CD8-positive, alpha-beta T cell (primary cell): ENCODE measurements at regions of chr3 and their contacts with region 1.

Region 1: GRCh38 chr3:17233398-17233800 is 348.6 kb downstream of the PLCL2 start:
- DNase-seq: peak in 7 of 9 experiments; percentile 7 to 79 (median 35)
- ATAC-seq: peak; percentile 99
- H3K4me3 ChIP-seq: no peak overlapping the region
- H3K4me3 Mint-ChIP-seq: no peak overlapping the region
- H3K27ac ChIP-seq: no peak overlapping the region
- H3K27ac Mint-ChIP-seq: peak overlapping the region; percentile 3
- H3K4me1 ChIP-seq: peaks cover 20% of the 10 kb centered on the region
- H3K4me1 Mint-ChIP-seq: peaks cover 24% of the 10 kb centered on the region
- H3K27me3 ChIP-seq: no peaks in the 10 kb centered on the region
- H3K27me3 Mint-ChIP-seq: no peaks in the 10 kb centered on the region
- CTCF ChIP-seq: peak; percentile 84

Region 2: DNA sequence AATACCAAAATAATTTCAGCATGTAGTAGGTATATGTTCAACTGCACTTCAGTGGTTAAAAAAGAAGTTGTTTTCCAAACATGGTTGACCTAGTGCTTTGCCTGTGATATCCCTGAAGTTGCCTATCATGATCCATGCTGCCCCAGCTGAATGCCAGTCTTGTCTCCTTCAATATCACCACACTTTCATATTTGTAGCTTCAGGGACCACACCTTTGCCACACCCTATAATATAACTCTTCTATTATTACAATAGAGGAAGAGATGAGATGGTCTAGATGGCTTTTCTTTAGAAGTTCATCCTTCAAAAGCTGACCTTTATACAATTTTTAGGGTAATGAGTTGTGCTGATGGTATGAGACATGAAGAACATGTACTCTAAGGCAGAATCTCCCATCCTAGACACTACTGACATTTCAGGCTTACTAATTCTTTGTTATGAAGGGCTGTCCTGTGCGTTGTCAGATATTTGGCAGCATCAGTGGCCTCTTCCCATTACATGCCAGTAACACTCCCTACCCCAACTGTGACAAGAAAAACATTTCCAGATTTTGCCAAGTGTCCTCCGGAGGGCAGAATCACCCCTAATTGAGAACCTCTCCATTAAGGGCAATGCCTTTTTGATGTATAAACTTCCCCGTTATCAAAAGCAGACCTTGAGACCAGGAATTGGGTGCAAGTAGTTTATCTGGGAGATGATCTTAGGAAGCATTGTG is 424.8 kb before region 1 on chr3:
- CTCF ChIA-PET with region 1: no interaction called
- POLR2A ChIA-PET with region 1: no interaction called
- intact Hi-C with region 1: loop called in 1 of 2 experiments (anchors 1 kb)
- DNase-seq: peak in 2 of 9 experiments; percentile 29 to 47
- ATAC-seq: no peak
- H3K4me3 ChIP-seq: no peak overlapping the region
- H3K4me3 Mint-ChIP-seq: no peak overlapping the region
- H3K27ac ChIP-seq: no peak overlapping the region
- H3K27ac Mint-ChIP-seq: no peak overlapping the region
- H3K4me1 ChIP-seq: peaks cover 14% of the 10 kb centered on the region
- H3K4me1 Mint-ChIP-seq: peaks cover 29% of the 10 kb centered on the region
- H3K27me3 ChIP-seq: no peaks in the 10 kb centered on the region
- H3K27me3 Mint-ChIP-seq: no peaks in the 10 kb centered on the region
- CTCF ChIP-seq: no peak

Region 3: GRCh38 chr3:16828815-16829214 is 404.6 kb before region 1 on chr3:
- CTCF ChIA-PET with region 1: interaction called, 5 read pairs
- POLR2A ChIA-PET with region 1: no interaction called
- intact Hi-C with region 1: loop called (anchors 1 to 2 kb)
- DNase-seq: peak in 8 of 9 experiments; percentile 34 to 80 (median 60)
- ATAC-seq: peak; percentile 73
- H3K4me3 ChIP-seq: no peak overlapping the region
- H3K4me3 Mint-ChIP-seq: no peak overlapping the region
- H3K27ac ChIP-seq: no peak overlapping the region
- H3K27ac Mint-ChIP-seq: peak overlapping the region; percentile 60
- H3K4me1 ChIP-seq: peaks cover 15% of the 10 kb centered on the region
- H3K4me1 Mint-ChIP-seq: peaks cover 26% of the 10 kb centered on the region
- H3K27me3 ChIP-seq: no peaks in the 10 kb centered on the region
- H3K27me3 Mint-ChIP-seq: no peaks in the 10 kb centered on the region
- CTCF ChIP-seq: peak; percentile 37

Region 4: DNA sequence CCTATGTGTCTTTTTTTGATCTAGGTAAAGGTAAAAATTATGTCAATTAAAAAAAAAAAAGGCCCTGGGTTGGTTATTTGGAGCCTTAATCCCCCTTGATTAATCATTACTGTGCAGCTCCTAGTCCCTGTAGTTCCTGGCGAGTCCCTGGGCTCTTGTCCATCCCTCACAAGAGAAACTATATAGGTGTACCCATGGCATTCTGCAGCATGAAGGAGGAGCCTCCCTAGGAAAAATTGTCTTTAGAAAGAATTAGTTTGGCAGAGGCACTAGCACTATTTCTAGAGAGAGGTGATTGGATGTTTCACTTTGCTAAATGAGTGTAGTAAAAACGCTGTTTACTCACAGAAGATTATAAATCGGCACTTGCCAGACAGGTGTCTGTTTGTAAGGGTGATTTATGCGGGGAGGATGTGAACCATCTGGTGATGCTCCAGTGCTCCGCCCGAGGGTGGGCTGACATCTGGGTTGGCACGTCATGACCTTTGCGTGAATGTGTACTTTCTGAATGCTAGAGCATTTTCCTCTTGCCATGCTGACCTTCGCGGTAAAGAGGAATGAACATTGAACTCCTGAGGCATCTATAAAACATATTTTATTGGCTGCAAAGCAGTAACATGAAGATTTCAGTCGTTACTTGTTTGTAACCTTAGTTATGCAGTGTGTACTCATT is 336.0 kb before region 1 on chr3:
- CTCF ChIA-PET with region 1: no interaction called
- POLR2A ChIA-PET with region 1: no interaction called
- intact Hi-C with region 1: no loop called
- DNase-seq: peak in 5 of 9 experiments; percentile 48 to 76 (median 58)
- ATAC-seq: peak; percentile 85
- H3K4me3 ChIP-seq: no peak overlapping the region
- H3K4me3 Mint-ChIP-seq: peak overlapping the region; percentile 65
- H3K27ac ChIP-seq: peak overlapping the region in 1 of 2 experiments; percentile 18
- H3K27ac Mint-ChIP-seq: peak overlapping the region; percentile 80
- H3K4me1 ChIP-seq: peaks cover 89% of the 10 kb centered on the region
- H3K4me1 Mint-ChIP-seq: peaks cover 90% of the 10 kb centered on the region
- H3K27me3 ChIP-seq: no peaks in the 10 kb centered on the region
- H3K27me3 Mint-ChIP-seq: no peaks in the 10 kb centered on the region
- CTCF ChIP-seq: no peak

Region 5: DNA sequence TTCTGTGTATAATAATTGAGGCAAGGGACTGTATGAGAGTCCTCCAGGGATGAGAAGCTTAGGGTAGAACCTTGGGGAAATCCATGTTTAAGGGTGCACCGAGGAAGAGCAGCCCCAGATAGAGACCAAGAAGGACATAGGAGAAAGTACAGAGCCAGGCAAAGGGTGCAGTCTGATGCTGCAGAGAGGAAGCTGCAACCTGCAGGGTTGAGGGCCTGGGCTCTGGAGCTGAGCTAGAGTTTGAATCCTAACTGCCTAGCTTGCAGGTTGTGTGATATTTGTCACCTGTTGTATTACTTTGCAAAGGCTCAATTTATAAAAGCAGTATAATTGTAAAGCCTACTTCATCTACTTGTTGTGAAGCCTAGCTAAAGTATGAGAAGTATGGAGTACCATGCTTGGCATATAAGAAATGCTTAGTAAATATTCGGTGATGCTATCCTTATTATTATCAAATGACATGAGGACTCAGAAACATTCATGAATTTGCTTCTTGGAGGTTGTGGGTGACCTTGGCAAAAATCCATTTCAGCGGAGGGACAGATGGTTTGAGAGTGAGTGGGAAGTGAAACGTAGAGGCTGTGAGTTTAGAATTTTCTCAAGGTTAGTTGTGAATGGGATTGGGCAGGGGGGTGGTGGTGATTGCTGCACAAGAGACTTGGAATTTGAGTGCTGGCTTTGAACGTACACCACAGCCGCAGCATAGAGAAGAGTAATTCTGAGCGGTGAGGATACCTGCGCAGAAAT is 304.8 kb before region 1 on chr3:
- CTCF ChIA-PET with region 1: no interaction called
- POLR2A ChIA-PET with region 1: no interaction called
- intact Hi-C with region 1: loop called in 1 of 2 experiments (anchors 5 kb)
- DNase-seq: no peak
- ATAC-seq: no peak
- H3K4me3 ChIP-seq: no peak overlapping the region
- H3K4me3 Mint-ChIP-seq: no peak overlapping the region
- H3K27ac ChIP-seq: no peak overlapping the region
- H3K27ac Mint-ChIP-seq: peak overlapping the region; percentile 42
- H3K4me1 ChIP-seq: peaks cover 38% of the 10 kb centered on the region
- H3K4me1 Mint-ChIP-seq: peaks cover 83% of the 10 kb centered on the region
- H3K27me3 ChIP-seq: no peaks in the 10 kb centered on the region
- H3K27me3 Mint-ChIP-seq: no peaks in the 10 kb centered on the region
- CTCF ChIP-seq: no peak

Region 6: DNA sequence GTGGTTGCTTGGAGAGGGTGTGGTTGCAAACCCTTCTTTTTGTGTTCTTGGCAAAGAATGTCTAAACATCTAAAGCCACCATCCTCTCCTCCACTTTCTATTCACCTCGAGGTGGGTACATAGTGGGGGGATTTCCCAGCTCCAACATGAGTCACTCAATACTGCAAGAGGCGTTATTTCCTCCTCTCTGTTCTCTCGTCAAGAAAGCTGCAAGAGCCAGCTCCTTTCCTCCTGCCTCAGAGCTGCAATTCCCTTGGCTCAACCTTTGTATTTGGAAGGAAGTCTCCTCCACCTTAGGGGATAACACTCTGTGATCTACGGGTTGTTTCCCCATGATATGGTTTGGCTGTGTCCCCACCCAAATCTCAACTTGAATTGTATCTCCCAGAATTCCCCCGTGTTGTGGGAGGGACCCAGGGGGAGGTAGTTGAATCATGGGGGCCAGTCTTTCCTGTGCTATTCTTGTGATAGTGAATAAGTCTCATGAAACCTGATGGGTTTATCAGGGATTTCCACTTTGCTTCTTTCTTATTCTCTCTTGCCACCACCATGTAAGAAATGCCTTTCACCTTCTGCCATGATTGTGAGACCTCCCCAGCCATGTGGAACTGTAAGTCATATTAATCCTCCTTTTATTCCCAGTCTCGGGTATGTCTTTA is 210.3 kb before region 1 on chr3:
- CTCF ChIA-PET with region 1: no interaction called
- POLR2A ChIA-PET with region 1: no interaction called
- intact Hi-C with region 1: loop called in 1 of 2 experiments (anchors 10 kb)
- DNase-seq: peak in 8 of 9 experiments; percentile 29 to 88 (median 60)
- ATAC-seq: peak; percentile 95
- H3K4me3 ChIP-seq: no peak overlapping the region
- H3K4me3 Mint-ChIP-seq: peak overlapping the region; percentile 55
- H3K27ac ChIP-seq: peak overlapping the region in 1 of 2 experiments; percentile 51
- H3K27ac Mint-ChIP-seq: peak overlapping the region; percentile 90
- H3K4me1 ChIP-seq: peaks cover 30% of the 10 kb centered on the region
- H3K4me1 Mint-ChIP-seq: peaks cover 70% of the 10 kb centered on the region
- H3K27me3 ChIP-seq: no peaks in the 10 kb centered on the region
- H3K27me3 Mint-ChIP-seq: no peaks in the 10 kb centered on the region
- CTCF ChIP-seq: no peak